ENCODE measurements at regions of chr3 and their contacts with region 1.

Region 1: GRCh38 chr3:114223143-114223542 is 14.2 kb downstream of the ZNF80 start:
- DNase-seq: peak in 7 of 9 donors; percentile 34 to 65 (median 50)
- ATAC-seq: peak; percentile 70
- H3K4me3 ChIP-seq: no peak overlapping the region
- H3K4me3 Mint-ChIP-seq: peak overlapping the region in 5 of 10 donors; percentile 2 to 51 (median 36)
- H3K27ac ChIP-seq: peak overlapping the region; percentile 40
- H3K27ac Mint-ChIP-seq: peak overlapping the region; percentile 71 to 97 (median 87)
- H3K4me1 ChIP-seq: peaks cover 43 to 98% of the 10 kb centered on the region in 2 donors
- H3K4me1 Mint-ChIP-seq: peaks cover 41 to 77% (median 66%) of the 10 kb centered on the region in 7 donors
- H3K27me3 ChIP-seq: no peaks in the 10 kb centered on the region
- H3K27me3 Mint-ChIP-seq: no peaks in the 10 kb centered on the region

Region 2: GRCh38 chr3:114242947-114243346 is 19.8 kb after region 1 on chr3:
- CTCF ChIA-PET with region 1: no interaction called
- POLR2A ChIA-PET with region 1: interaction called, 3 read pairs
- intact Hi-C with region 1: loop called in 1 of 2 experiments (anchors 1 kb)
- DNase-seq: no peak
- ATAC-seq: no peak
- H3K4me3 ChIP-seq: no peak overlapping the region
- H3K4me3 Mint-ChIP-seq: peak overlapping the region in 1 of 10 donors; percentile 10
- H3K27ac ChIP-seq: no peak overlapping the region
- H3K27ac Mint-ChIP-seq: peak overlapping the region in 2 of 9 donors; percentile 55 to 69
- H3K4me1 ChIP-seq: no peaks in the 10 kb centered on the region
- H3K4me1 Mint-ChIP-seq: peaks cover 0 to 19% (median 2%) of the 10 kb centered on the region in 7 donors
- H3K27me3 ChIP-seq: no peaks in the 10 kb centered on the region
- H3K27me3 Mint-ChIP-seq: no peaks in the 10 kb centered on the region

Region 3: DNA sequence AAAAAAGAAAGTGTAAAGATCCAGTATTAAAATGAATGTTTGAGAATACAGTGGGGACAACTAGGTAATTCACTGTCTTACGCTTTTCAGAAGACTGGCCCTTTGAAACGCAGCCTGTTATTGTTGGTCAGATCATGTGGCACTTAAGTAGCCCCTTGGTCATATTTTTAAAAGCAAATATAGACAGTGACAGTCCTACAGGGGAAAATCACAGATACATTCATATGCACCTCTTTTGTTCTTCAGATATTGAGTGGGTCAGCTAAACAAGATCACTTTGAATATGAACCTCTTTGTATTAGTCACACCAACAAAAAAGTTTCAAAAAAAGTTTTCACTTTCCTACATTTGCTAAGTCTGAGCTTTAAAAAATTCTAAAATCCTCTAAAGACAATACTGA is 106.7 kb after region 1 on chr3:
- CTCF ChIA-PET with region 1: no interaction called
- POLR2A ChIA-PET with region 1: no interaction called
- intact Hi-C with region 1: loop called in 1 of 2 experiments (anchors 5 kb)
- DNase-seq: no peak
- ATAC-seq: no peak
- H3K4me3 ChIP-seq: no peak overlapping the region
- H3K4me3 Mint-ChIP-seq: no peak overlapping the region
- H3K27ac ChIP-seq: no peak overlapping the region
- H3K27ac Mint-ChIP-seq: no peak overlapping the region
- H3K4me1 ChIP-seq: peaks cover 0 to 42% of the 10 kb centered on the region in 2 donors
- H3K4me1 Mint-ChIP-seq: peaks cover 0 to 34% (median 8%) of the 10 kb centered on the region in 7 donors
- H3K27me3 ChIP-seq: no peaks in the 10 kb centered on the region
- H3K27me3 Mint-ChIP-seq: no peaks in the 10 kb centered on the region